GM10248 (cell line): ENCODE measurements at regions of chr5 and their contacts with region 1.

Region 1: DNA sequence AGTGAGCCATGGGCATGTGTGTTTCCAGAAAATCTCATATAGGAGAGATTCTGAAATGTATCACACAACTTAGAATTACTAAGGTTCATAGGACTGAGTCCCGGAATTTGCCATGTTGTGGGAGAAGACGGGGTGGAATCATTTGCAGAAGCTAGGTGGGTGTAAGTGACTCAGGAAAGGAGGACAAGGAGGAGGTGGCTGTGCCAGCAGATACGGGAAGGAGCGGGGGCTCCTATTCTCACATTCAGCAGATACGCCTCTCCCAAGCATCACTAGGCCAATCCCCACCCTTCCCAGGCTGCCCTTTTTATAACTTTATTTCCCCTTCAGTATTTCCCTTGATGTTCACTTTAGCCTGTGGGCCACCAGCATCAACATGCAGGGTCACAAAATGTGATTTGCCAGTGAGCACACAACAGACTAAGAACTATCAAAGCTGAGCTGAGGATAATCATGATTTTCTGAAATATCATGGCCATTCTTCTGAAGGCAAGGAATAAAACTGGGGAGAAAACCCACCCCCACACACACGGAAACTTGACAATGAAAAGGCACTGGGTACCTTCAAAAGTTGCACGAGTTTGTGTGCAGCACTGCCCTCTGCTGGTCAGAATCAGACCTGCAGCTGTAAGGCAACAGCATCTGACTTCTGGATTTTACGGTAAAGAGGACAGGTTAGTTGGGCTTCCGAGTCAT is 133.2 kb downstream of the MTX3 start:
- DNase-seq: peak; percentile 57
- CTCF ChIP-seq: peak; percentile 95

Region 2: DNA sequence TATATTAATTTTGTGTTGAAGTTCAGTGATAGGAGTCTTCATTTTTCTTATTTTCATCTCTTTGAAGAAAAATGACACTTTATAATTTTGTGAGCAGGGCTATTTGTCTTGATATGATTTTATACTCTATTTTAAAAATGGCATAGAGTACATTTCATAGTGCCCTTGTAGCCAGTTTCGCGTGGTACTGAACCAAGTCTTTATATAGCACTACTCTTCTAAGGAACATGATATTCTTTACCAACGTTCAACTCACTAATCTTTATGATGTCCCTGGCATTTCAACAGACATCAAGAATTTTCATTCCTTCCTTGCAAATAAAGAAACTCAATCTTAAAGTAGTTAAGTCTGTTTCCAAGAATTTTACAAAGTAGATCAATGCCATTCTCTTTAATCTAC is 302.4 kb before region 1 on chr5:
- CTCF ChIA-PET with region 1: interaction called, 11 read pairs
- POLR2A ChIA-PET with region 1: no interaction called
- DNase-seq: no peak
- CTCF ChIP-seq: no peak

Region 3: GRCh38 chr5:79845448-79846197 is 12.2 kb before region 1 on chr5:
- CTCF ChIA-PET with region 1: interaction called, 11 read pairs
- POLR2A ChIA-PET with region 1: no interaction called
- DNase-seq: no peak
- CTCF ChIP-seq: no peak

Region 4: DNA sequence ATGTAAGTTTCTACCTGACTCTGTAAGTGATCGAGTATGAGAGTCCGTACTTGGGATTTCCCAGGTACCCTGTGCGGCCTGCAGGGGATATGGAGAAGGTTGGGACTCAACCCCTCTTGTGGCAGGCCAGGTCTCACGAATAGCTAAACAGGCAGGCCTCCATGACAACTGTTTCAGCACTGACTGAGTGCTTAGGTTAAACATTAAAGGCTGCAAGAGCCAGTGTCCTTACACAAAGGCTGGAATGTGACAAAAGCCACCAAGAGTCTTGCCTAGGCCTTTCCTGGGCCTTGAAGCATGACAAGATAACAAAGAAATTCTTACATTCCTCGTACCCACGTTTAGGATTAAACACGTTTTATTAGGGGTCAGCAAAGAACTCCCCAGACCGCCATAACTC is 235.9 kb after region 1 on chr5:
- CTCF ChIA-PET with region 1: no interaction called
- POLR2A ChIA-PET with region 1: no interaction called
- DNase-seq: no peak
- CTCF ChIP-seq: no peak